HCT116 (cell line): ENCODE measurements at regions of chr3 and their contacts with region 1.

Region 1: GRCh38 chr3:45182915-45183867 is 37.0 kb upstream of the CDCP1 start:
- DNase-seq: peak; percentile 35
- ATAC-seq: peak; percentile 90
- H3K4me3 ChIP-seq: no peak overlapping the region
- H3K27ac ChIP-seq: peak overlapping the region; percentile 9; the same call in 1 of the 2 replicates
- H3K4me1 ChIP-seq: peaks cover 19 to 31% of the 10 kb centered on the region in 2 experiments; a peak in 3 of 4 replicates
- H3K27me3 ChIP-seq: no peaks in the 10 kb centered on the region
- CTCF ChIP-seq: no peak
- POLR2A ChIP-seq: no peak
- RAD21 ChIP-seq: no peak

Region 2: GRCh38 chr3:45145681-45146614 is 37.2 kb before region 1 on chr3 and contains the start of gene CDCP1:
- CTCF ChIA-PET with region 1: no interaction called
- POLR2A ChIA-PET with region 1: no interaction called
- RAD21 ChIA-PET with region 1: no interaction called
- intact Hi-C with region 1: loop called (anchors 1 kb)
- DNase-seq: no peak
- ATAC-seq: peak; percentile 98
- H3K4me3 ChIP-seq: peak within 1 kb of the TSS; percentile 86 to 97
- H3K27ac ChIP-seq: peak within 1 kb of the TSS; percentile 92
- H3K4me1 ChIP-seq: peaks cover 30 to 50% of the 10 kb centered on the region in 2 experiments
- H3K27me3 ChIP-seq: no peaks in the 10 kb centered on the region
- CTCF ChIP-seq: no peak
- POLR2A ChIP-seq: peak; percentile 86
- RAD21 ChIP-seq: no peak
- total RNA-seq, gene CDCP1: 196 TPM